RWPE1 (cell line): ENCODE measurements at regions of chr2 and their contacts with region 1.

Region 1: GRCh38 chr2:84919885-84920580 is 14.6 kb downstream of the TMSB10 start:
- DNase-seq: peak; percentile 80
- H3K27ac ChIP-seq: peak overlapping the region; percentile 98
- CTCF ChIP-seq: no peak

Region 2: DNA sequence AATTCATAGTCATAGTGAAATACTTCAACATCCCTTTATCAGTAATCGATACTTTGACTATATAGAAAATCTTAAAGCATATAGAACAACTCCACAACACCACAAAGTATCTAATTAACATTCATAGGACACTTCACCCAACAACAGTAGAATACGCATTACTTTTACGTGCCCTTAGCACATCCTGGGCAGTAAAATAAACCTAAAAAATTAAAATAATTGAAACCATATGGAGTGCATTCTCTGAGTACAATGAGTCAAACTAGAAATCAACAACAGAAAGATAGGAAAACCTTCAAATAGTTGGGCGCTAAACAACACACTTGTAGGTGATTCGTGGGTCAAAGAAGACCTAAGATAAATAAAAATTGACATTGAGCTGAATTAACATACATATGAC is 903.9 kb before region 1 on chr2:
- CTCF ChIA-PET with region 1: no interaction called
- POLR2A ChIA-PET with region 1: no interaction called
- DNase-seq: no peak
- H3K27ac ChIP-seq: no peak overlapping the region
- CTCF ChIP-seq: no peak

Region 3: GRCh38 chr2:84891355-84892010 is 28.6 kb before region 1 on chr2:
- CTCF ChIA-PET with region 1: interaction called, 4 read pairs
- POLR2A ChIA-PET with region 1: interaction called, 11 read pairs
- DNase-seq: no peak
- H3K27ac ChIP-seq: no peak overlapping the region
- CTCF ChIP-seq: no peak

Region 4: GRCh38 chr2:84905181-84906107 is 14.6 kb before region 1 on chr2 and contains the start of gene TMSB10:
- CTCF ChIA-PET with region 1: interaction called, 16 read pairs
- POLR2A ChIA-PET with region 1: interaction called, 15 read pairs
- DNase-seq: peak; percentile 90
- H3K27ac ChIP-seq: peak within 1 kb of the TSS; percentile 99
- CTCF ChIP-seq: no peak